WTC11 (cell line): ENCODE measurements at regions of chr5 and their contacts with region 1.

Region 1: GRCh38 chr5:141094481-141095262 is at the start of gene PCDHB2:
- DNase-seq: peak; percentile 83
- ATAC-seq: peak; percentile 94
- H3K4me3 Mint-ChIP-seq: peak within 1 kb of the TSS; percentile 95
- H3K27ac Mint-ChIP-seq: peak within 1 kb of the TSS; percentile 97
- H3K4me1 Mint-ChIP-seq: peaks cover 12% of the 10 kb centered on the region
- H3K27me3 Mint-ChIP-seq: no peaks in the 10 kb centered on the region
- CTCF ChIP-seq: peak; percentile 88
- total RNA-seq, gene PCDHB2: 22.9 to 26.2 TPM (median 23.1 TPM) in 3 replicates

Region 2: DNA sequence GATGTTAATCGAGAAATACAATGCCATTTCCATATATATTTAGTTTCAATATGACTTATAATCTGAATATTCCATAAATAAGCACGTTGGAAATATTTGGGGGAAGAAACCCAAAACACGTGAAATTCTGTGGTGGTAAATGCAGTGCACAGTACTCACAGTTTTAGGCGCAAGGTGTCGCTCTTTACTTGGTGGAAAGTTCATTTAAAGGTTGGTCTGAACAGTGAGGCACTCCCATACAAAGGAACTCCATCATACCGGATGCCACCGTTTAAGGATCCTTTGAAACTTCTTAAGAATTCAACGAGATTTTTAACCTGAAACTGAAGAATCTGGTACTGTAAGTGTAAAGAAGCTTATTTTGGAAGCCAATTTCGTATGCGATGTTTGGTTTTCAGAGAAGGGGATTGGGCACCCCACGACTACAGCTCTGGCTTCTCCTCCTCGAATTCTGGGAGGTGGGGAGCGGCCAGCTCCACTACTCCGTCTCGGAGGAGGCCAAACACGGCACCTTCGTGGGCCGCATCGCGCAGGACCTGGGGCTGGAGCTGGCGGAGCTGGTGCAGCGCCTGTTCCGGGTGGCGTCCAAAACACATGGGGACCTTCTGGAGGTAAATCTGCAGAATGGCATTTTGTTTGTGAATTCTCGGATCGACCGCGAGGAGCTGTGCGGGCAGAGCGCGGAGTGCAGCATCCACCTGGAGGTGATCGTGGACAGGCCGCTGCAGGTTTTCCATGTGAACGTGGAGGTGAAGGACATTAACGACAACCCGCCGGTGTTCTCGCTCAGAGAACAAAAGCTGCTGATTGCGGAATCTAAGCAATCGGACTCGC is 225.7 kb before region 1 on chr5 and contains the start of gene PCDHA11:
- CTCF ChIA-PET with region 1: interaction called, 10 read pairs
- POLR2A ChIA-PET with region 1: interaction called, 4 read pairs
- DNase-seq: no peak
- ATAC-seq: peak; percentile 93
- H3K4me3 Mint-ChIP-seq: peak within 1 kb of the TSS; percentile 88
- H3K27ac Mint-ChIP-seq: peak within 1 kb of the TSS; percentile 78
- H3K4me1 Mint-ChIP-seq: peaks cover 16% of the 10 kb centered on the region
- H3K27me3 Mint-ChIP-seq: no peaks in the 10 kb centered on the region
- CTCF ChIP-seq: no peak
- total RNA-seq, gene PCDHA11: 5.8 to 8.7 TPM (median 7.9 TPM) in 3 replicates

Region 3: DNA sequence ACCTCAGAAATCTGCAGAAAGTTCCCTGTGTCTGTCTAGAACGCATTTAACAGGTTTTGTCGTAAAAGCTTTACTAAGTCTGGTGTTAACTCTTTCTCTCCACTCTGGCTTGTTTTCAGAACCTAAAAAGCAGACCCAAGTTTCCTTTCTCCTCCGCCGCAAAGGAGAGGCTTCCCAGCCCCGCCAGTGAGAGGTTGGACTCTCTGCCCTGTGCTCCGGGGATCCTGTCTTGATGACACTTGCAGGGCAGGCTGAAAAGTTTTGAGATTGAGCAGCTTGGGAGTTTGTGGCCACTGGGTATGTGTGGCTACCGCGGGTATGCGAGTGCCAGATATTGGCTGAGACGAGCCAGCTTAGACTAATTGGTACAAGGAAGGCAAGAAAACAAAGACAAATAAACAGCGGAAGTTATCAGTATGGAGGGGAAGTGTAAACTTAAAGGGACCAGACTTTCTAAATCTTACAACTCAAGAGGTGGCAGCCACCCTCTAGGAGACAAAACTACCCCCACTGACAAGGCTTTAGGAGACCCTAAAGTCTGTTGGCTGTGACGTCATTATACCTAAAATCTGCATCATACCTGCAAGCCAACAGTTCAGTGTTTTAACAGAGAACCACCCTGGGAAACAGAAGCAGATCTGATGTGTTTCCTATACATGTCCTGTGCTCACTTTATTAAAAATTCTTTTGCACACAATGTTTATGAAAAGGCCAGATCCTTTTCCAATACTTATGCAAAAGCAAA is 84.5 kb before region 1 on chr5:
- CTCF ChIA-PET with region 1: no interaction called
- POLR2A ChIA-PET with region 1: no interaction called
- DNase-seq: no peak
- ATAC-seq: no peak
- H3K4me3 Mint-ChIP-seq: no peak overlapping the region
- H3K27ac Mint-ChIP-seq: no peak overlapping the region; the same call in 1 of the 2 replicates
- H3K4me1 Mint-ChIP-seq: peaks cover 26% of the 10 kb centered on the region
- H3K27me3 Mint-ChIP-seq: no peaks in the 10 kb centered on the region
- CTCF ChIP-seq: no peak

Region 4: DNA sequence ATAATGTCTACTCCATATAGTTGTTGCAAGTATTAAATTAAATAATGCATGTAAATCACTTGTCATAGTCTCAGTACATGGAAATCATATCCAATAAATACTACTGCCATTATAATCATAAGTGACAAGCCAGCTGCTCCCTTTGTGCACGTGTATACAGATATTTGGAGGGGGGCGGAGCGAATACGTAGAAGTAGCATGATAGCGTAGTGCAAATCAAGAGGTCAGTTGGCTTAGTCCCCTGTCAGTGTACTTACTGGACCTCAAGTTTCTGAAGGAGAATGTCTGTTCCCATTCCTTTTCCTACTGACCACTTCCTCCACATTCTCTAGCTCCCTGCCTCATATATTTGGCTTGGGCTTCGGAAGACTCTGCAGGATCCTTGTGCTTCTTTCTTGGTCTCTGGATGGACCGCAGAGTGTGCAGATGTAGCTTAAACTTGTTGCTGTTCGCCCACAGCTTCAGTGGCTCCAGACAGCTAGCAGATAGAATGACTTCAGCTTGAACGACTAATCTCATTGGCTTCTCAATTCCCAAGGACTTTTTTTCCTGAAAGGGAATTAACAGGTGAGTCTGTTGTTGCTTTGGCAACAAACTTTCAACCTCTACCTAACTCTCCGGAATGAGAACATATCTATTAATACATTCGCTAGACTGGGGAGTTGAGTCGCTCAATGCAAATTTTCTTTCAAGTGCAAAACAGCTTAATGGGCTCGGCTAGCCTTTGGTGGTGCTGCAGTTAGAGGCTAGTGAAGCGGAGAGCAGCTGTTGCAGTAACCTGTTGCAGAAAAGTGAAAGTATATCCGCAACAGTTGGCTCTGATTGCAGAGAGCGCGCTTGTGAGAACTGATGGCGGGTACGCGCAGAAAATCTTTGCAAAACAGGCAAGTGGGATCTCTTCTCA is 43.8 kb before region 1 on chr5 and contains the start of gene PCDHB1:
- CTCF ChIA-PET with region 1: interaction called, 15 read pairs
- POLR2A ChIA-PET with region 1: no interaction called
- DNase-seq: peak; percentile 26
- ATAC-seq: peak; percentile 80
- H3K4me3 Mint-ChIP-seq: peak within 1 kb of the TSS; percentile 82
- H3K27ac Mint-ChIP-seq: peak within 1 kb of the TSS; percentile 73
- H3K4me1 Mint-ChIP-seq: peaks cover 13% of the 10 kb centered on the region
- H3K27me3 Mint-ChIP-seq: peaks cover 45% of the 10 kb centered on the region
- CTCF ChIP-seq: no peak
- total RNA-seq, gene PCDHB1: 0.09 to 0.13 TPM (median 0.11 TPM) in 3 replicates

Region 5: GRCh38 chr5:141121563-141121962 is 26.9 kb after region 1 on chr5 and contains the start of gene PCDHB4:
- CTCF ChIA-PET with region 1: interaction called, 24 read pairs
- POLR2A ChIA-PET with region 1: no interaction called
- DNase-seq: peak; percentile 69
- ATAC-seq: peak; percentile 73
- H3K4me3 Mint-ChIP-seq: peak within 1 kb of the TSS; percentile 51
- H3K27ac Mint-ChIP-seq: no peak within 1 kb of the TSS
- H3K4me1 Mint-ChIP-seq: no peaks in the 10 kb centered on the region
- H3K27me3 Mint-ChIP-seq: no peaks in the 10 kb centered on the region
- CTCF ChIP-seq: peak; percentile 79
- total RNA-seq, gene PCDHB4: 2.3 to 2.6 TPM (median 2.3 TPM) in 3 replicates

Region 6: DNA sequence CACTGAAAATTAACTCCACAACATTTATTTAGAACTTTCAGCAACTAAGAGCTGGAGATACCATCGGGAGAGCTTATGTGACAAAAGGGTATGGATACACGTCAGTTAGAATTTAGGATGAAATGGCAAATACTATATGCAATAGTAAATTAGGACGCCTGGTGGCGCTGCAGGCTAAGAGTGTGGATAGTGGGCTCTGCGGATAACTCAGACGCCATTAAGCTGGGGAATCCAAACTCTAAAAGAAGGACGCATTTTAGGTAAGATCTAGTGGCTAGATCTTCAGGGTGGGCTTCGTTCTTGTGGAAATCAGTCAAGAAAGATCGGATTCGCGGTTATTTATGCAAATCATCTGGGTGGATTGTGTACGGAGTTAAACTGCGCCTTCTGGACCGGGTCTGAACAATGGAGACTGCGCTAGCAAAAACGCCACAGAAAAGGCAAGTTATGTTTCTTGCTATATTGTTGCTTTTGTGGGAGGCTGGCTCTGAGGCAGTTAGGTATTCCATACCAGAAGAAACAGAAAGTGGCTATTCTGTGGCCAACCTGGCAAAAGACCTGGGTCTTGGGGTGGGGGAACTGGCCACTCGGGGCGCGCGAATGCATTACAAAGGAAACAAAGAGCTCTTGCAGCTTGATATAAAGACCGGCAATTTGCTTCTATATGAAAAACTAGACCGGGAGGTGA is 40.5 kb after region 1 on chr5 and contains the start of gene PCDHB5:
- CTCF ChIA-PET with region 1: interaction called, 20 read pairs
- POLR2A ChIA-PET with region 1: no interaction called
- DNase-seq: peak; percentile 72
- ATAC-seq: peak; percentile 89
- H3K4me3 Mint-ChIP-seq: peak within 1 kb of the TSS; percentile 74
- H3K27ac Mint-ChIP-seq: peak within 1 kb of the TSS; percentile 64; the same call in 1 of the 2 replicates
- H3K4me1 Mint-ChIP-seq: peaks cover 4% of the 10 kb centered on the region; the same call in 1 of the 2 replicates
- H3K27me3 Mint-ChIP-seq: no peaks in the 10 kb centered on the region
- CTCF ChIP-seq: peak; percentile 72
- total RNA-seq, gene PCDHB5: 6.8 to 12.5 TPM (median 8.5 TPM) in 3 replicates

Region 7: DNA sequence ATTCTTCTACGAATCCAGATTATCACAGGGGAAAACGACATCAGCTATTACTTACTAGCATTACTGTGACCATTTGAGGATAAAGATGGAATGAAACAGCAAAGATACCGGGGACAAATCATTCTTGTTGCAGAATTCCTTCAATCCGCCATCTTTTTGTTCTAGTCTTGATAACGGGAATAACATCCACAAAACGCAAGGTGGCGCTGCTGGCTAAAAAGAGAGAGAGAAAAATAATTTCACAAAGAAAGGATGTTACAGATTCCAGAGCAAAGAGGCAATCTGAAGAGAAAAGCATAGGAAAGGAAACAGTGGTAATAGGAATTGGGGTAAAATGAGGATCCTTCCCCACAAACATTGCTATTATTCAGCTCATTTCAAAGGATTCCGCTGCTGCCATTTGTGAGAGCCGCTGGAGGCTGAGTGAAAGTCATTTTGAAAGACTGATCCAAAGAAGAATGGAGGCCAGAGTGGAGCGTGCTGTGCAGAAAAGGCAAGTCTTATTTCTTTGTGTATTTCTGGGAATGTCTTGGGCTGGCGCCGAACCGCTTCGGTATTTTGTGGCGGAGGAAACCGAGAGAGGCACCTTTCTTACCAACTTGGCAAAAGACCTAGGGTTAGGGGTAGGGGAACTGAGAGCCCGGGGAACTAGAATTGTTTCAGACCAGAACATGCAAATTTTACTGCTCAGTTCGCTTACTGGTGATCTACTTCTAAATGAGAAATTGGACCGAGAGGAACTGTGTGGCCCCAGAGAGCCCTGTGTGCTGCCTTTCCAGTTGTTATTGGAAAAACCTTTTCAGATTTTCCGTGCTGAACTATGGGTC is 77.9 kb after region 1 on chr5 and contains the start of gene PCDHB7:
- CTCF ChIA-PET with region 1: interaction called, 11 read pairs
- POLR2A ChIA-PET with region 1: no interaction called
- DNase-seq: peak; percentile 57
- ATAC-seq: no peak
- H3K4me3 Mint-ChIP-seq: no peak within 1 kb of the TSS
- H3K27ac Mint-ChIP-seq: no peak within 1 kb of the TSS
- H3K4me1 Mint-ChIP-seq: no peaks in the 10 kb centered on the region
- H3K27me3 Mint-ChIP-seq: peaks cover 3% of the 10 kb centered on the region; the same call in 1 of the 2 replicates
- CTCF ChIP-seq: peak; percentile 66
- total RNA-seq, gene PCDHB7: 0.17 to 0.27 TPM (median 0.23 TPM) in 3 replicates

Region 8: DNA sequence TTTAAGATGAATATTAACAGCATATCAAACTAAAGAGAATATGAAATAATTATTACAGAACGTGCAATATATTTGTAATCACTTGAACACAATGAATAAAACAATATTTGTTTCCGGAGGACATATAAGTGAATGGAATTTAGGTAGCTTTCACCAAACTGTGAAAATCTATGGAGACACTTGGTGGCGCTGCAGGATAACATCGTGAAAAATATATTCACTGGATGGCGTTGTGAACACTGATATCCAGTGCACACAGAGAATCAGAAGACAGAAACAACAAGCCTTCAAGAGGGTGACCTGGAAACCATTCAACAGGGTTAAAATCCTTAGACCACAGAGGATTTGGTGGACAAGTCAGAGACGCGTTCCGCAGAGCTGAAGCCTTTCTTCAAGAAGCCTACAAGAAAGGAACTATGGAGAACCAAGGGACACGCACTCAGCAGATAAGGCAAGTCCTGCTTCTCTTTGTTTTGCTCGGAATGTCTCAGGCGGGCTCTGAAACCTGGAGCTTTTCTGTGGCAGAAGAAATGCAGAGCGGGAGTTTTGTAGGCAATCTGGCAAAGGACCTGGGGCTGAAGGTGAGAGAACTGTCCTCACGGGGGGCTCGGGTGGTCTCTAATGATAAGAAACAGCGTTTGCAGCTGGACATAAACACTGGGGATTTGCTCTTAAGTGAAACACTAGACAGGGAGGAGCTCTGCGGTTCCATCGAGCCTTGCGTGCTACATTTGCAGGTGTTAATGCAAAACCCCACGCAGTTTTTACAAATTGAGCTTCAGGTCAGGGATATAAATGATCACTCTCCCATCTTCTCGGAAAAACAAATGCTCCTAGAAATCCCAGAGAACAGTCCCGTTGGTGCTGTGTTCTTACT is 104.9 kb after region 1 on chr5 and contains the start of gene PCDHB11:
- CTCF ChIA-PET with region 1: interaction called, 11 read pairs
- POLR2A ChIA-PET with region 1: no interaction called
- DNase-seq: no peak
- ATAC-seq: peak; percentile 67
- H3K4me3 Mint-ChIP-seq: peak within 1 kb of the TSS; percentile 24
- H3K27ac Mint-ChIP-seq: no peak within 1 kb of the TSS
- H3K4me1 Mint-ChIP-seq: peaks cover 7% of the 10 kb centered on the region
- H3K27me3 Mint-ChIP-seq: no peaks in the 10 kb centered on the region; the same call in 1 of the 2 replicates
- CTCF ChIP-seq: peak; percentile 32; the same call in 1 of the 2 replicates
- total RNA-seq, gene PCDHB11: 0.61 to 1.2 TPM (median 0.92 TPM) in 3 replicates